Heart left ventricle (tissue), 16 donors: ENCODE measurements at regions of chr10 and their contacts with region 1.

Region 1: GRCh38 chr10:74363727-74364126 is 212.7 kb downstream of the ADK start:
- DNase-seq: no peak
- ATAC-seq: peak in 3 of 4 donors; percentile 23 to 34 (median 34)
- H3K4me3 ChIP-seq: no peak overlapping the region
- H3K27ac ChIP-seq: peak overlapping the region in 2 of 12 donors; percentile 18 to 48
- H3K4me1 ChIP-seq: peaks cover 0 to 10% (median 0%) of the 10 kb centered on the region in 12 donors
- H3K27me3 ChIP-seq: no peaks in the 10 kb centered on the region
- CTCF ChIP-seq: no peak
- POLR2A ChIP-seq: no peak

Region 2: GRCh38 chr10:74293686-74294371 is 69.9 kb before region 1 on chr10:
- intact Hi-C with region 1: loop called in 1 of 10 experiments (anchors 10 kb)
- DNase-seq: peak in 2 of 5 donors; percentile 30 to 36
- ATAC-seq: peak; percentile 13 to 60 (median 50)
- H3K4me3 ChIP-seq: no peak overlapping the region
- H3K27ac ChIP-seq: peak overlapping the region in 9 of 12 donors; percentile 5 to 64 (median 37)
- H3K4me1 ChIP-seq: peaks cover 0 to 30% (median 11%) of the 10 kb centered on the region in 12 donors
- H3K27me3 ChIP-seq: no peaks in the 10 kb centered on the region
- CTCF ChIP-seq: no peak
- POLR2A ChIP-seq: no peak